ENCODE measurements at regions of chr9 and their contacts with region 1.

Region 1: GRCh38 chr9:15485836-15486666 is 24.7 kb downstream of the PSIP1 start:
- DNase-seq: no peak
- ATAC-seq: peak; percentile 61
- H3K4me3 Mint-ChIP-seq: no peak overlapping the region
- H3K27ac Mint-ChIP-seq: peak overlapping the region; percentile 72
- H3K4me1 Mint-ChIP-seq: peaks cover 41% of the 10 kb centered on the region
- H3K27me3 Mint-ChIP-seq: no peaks in the 10 kb centered on the region

Region 2: DNA sequence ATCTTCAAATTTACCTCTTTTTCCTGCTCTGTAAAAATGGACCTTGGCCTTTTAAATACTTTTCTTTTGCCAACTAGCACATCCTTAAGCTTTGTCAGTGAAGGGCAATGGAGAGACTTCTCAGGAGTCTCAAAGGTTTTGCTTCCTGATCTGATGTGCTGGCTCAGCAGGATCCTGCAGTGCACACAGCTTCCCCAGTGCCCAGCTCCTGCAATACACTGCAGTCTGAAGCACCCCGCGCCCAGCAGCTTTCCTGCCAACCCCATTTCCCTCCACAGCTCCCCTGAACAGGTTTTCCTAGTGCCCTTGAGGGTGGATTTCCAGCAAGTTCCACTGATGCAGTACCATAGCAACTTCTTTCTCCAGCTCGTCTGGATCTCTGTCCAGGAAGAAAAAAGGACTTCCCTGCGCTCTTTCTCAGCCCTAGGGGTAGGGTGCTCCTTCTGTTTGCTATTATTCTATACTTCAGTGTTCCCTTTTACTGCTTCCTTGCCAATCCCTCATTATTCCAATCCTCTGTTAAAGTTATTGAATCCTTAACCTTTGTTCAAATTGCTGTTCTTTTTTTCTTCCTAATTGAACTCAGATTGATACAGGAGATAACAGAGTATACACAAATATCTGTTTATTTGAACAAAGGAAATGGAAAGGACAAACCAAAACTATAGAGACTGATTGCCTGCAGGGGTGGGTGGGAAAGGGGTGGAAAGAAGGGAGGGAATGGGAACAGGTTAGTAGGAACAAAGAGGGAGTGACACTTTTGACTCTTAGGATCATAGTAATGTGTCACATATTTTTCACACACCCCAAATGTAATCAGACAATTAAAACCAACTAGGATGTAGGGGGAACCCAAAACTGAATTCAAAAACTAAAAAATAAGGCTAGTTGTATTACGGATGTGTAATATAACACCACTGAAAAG is 54.9 kb before region 1 on chr9:
- CTCF ChIA-PET with region 1: no interaction called
- POLR2A ChIA-PET with region 1: no interaction called
- intact Hi-C with region 1: loop called in 1 of 2 experiments (anchors 5 kb)
- DNase-seq: no peak
- ATAC-seq: no peak
- H3K4me3 Mint-ChIP-seq: no peak overlapping the region
- H3K27ac Mint-ChIP-seq: peak overlapping the region; percentile 13
- H3K4me1 Mint-ChIP-seq: peaks cover 39% of the 10 kb centered on the region
- H3K27me3 Mint-ChIP-seq: no peaks in the 10 kb centered on the region

Region 3: GRCh38 chr9:15901572-15901971 is 415.5 kb after region 1 on chr9:
- CTCF ChIA-PET with region 1: no interaction called
- POLR2A ChIA-PET with region 1: no interaction called
- intact Hi-C with region 1: no loop called
- DNase-seq: no peak
- ATAC-seq: no peak
- H3K4me3 Mint-ChIP-seq: no peak overlapping the region
- H3K27ac Mint-ChIP-seq: no peak overlapping the region
- H3K4me1 Mint-ChIP-seq: no peaks in the 10 kb centered on the region
- H3K27me3 Mint-ChIP-seq: no peaks in the 10 kb centered on the region

Measured in activated CD4-positive, alpha-beta T cell treated with anti-CD3 and anti-CD28 coated beads for 36 hours (primary cell).